Activated CD8-positive, alpha-beta memory T cell treated with anti-CD3 and anti-CD28 coated beads, Interleukin-2, amount 10 ng/mL, durations not matched to agents 7 days and 5 days (primary cell): ENCODE measurements at regions of chr19 and their contacts with region 1.

Region 1: GRCh38 chr19:18503971-18504885 is 17.6 kb downstream of the ELL start:
- DNase-seq: no peak
- ATAC-seq: no peak
- H3K4me3 Mint-ChIP-seq: no peak overlapping the region
- H3K27ac Mint-ChIP-seq: peak overlapping the region; percentile 5
- H3K4me1 Mint-ChIP-seq: peaks cover 91% of the 10 kb centered on the region
- H3K27me3 Mint-ChIP-seq: no peaks in the 10 kb centered on the region

Region 2: DNA sequence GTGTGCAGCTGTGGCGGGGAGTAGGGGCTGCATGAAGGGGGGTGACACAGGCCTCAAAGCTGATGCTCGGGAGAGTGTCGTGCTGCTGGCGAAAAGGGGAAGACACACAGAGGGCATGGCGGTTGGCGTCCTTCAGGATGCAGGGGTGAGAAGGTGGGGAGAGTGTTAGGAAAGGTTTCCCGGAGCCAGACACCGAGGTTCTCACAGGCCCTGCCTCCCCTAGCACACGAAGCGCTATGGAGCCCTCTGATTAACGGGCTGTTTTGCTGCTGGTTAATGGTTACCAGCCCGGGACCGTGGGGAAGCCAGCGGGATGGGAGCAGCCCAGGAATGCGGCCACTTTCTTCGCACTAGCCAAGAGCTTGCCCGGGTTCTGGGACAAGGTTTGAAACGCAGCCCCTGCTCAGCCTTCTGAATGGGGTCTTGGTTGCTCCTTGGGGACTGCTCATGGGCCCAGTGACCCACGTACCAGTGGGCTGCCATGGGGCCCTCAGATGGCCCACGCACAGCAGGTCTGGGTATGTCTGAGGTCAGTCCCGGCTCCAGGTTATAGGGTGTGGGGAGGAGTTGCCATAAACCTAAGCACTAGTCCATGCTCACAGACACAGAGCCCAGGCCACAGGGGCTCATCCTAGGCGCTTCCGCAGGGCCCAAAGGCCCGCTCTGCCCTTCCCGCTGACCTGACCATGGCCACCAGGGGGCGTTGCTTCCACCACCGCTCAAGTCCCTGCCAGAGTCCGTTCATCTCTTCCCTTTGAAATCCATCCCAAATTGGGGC is 35.0 kb before region 1 on chr19:
- CTCF ChIA-PET with region 1: interaction called, 13 read pairs
- DNase-seq: peak; percentile 63
- ATAC-seq: peak; percentile 57
- H3K4me3 Mint-ChIP-seq: no peak overlapping the region
- H3K27ac Mint-ChIP-seq: no peak overlapping the region
- H3K4me1 Mint-ChIP-seq: peaks cover 25% of the 10 kb centered on the region
- H3K27me3 Mint-ChIP-seq: no peaks in the 10 kb centered on the region

Region 3: GRCh38 chr19:18649371-18650020 is 145.3 kb after region 1 on chr19:
- CTCF ChIA-PET with region 1: no interaction called
- DNase-seq: no peak
- ATAC-seq: no peak
- H3K4me3 Mint-ChIP-seq: no peak overlapping the region
- H3K27ac Mint-ChIP-seq: no peak overlapping the region
- H3K4me1 Mint-ChIP-seq: no peaks in the 10 kb centered on the region
- H3K27me3 Mint-ChIP-seq: no peaks in the 10 kb centered on the region